PC-3 (cell line): ENCODE measurements at regions of chr7 and their contacts with region 1.

Region 1: DNA sequence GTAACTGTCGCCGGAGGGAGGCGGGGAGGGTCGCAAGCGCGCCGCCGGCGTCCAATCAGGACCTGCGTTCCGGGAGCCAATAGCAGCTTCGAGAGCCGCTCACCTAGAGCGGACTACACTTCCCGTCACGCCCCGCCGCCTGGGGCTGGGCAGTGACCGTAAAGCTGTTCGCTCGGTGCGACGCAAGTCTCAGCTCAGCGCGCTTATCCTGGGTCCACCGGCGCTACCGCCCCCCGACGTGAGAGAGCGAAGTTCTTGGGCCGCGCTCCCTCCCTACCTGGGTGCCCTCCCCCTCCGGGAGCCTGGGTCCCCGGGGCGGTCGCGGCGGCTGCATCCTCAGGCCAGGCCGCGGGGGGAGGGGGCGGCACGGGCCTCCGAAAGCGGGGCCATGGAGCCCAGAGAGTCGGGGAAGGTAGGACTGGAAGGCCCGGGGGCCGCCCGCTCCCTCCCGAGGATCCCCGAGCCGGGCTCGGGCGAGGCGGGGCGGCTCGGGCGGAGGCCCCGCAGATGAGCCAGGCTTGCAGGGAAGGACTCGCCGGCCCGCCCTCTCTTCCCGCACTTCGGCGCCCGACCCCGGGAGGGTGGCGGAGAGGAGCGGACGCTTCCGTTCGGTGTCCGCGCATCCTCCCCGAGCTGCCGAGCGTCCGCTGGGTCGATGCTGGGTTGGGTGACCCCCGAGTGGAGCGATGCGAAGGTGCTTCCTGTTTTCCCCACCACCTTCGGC is at the start of gene ZNF862:
- DNase-seq: peak; percentile 96
- ATAC-seq: peak; percentile 97
- H3K4me3 ChIP-seq: peak within 1 kb of the TSS; percentile 84
- H3K27ac ChIP-seq: no peak within 1 kb of the TSS
- H3K4me1 ChIP-seq: peaks cover 11% of the 10 kb centered on the region
- H3K27me3 ChIP-seq: no peaks in the 10 kb centered on the region
- CTCF ChIP-seq: no peak
- total RNA-seq, gene ZNF862: 3.0 and 15.1 TPM in 2 replicates

Region 2: DNA sequence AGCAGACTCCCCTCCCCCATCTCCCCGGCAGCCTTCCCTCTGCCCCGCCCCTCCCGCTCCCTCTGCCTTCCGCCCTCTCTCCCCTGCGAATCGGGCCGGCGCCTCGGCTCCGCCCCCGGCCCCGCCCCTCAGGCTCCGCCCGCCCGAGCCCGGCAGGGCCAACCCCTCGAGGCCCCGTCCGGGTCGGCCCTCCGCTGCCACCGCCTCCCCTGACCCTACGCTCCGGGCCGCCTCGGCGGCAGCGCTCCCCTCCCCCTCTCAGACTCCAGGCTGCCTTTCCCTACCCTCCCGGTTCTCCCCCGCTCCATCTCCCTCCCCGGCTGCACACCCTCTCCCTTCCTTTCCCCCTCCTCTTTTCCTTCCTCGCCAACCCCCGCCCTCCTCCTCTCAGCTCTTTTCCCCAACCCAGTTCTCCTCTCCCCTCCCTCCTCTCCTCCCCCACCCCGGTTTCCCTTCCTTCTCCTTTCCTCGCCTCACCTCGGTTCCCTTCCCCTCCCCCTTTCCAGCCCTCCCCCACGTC is 66.6 kb before region 1 on chr7:
- CTCF ChIA-PET with region 1: no interaction called
- POLR2A ChIA-PET with region 1: no interaction called
- intact Hi-C with region 1: loop called (anchors 5 kb)
- DNase-seq: peak; percentile 92
- ATAC-seq: peak; percentile 77
- H3K4me3 ChIP-seq: peak overlapping the region; percentile 61
- H3K27ac ChIP-seq: no peak overlapping the region
- H3K4me1 ChIP-seq: peaks cover 7% of the 10 kb centered on the region
- H3K27me3 ChIP-seq: no peaks in the 10 kb centered on the region
- CTCF ChIP-seq: no peak